Body of pancreas (tissue), 4 donors: ENCODE measurements at regions of chr9 and their contacts with region 1.

Region 1: GRCh38 chr9:95127249-95128176 is 190.0 kb downstream of the FANCC start:
- DNase-seq: peak; percentile 88 to 93 (median 89)
- ATAC-seq: peak; percentile 87
- H3K4me3 ChIP-seq: no peak overlapping the region
- H3K27ac ChIP-seq: no peak overlapping the region
- H3K4me1 ChIP-seq: peaks cover 30% of the 10 kb centered on the region
- H3K27me3 ChIP-seq: no peaks in the 10 kb centered on the region
- CTCF ChIP-seq: peak; percentile 93 to 99 (median 97)
- POLR2A ChIP-seq: peak in 1 of 3 donors; percentile 9

Region 2: DNA sequence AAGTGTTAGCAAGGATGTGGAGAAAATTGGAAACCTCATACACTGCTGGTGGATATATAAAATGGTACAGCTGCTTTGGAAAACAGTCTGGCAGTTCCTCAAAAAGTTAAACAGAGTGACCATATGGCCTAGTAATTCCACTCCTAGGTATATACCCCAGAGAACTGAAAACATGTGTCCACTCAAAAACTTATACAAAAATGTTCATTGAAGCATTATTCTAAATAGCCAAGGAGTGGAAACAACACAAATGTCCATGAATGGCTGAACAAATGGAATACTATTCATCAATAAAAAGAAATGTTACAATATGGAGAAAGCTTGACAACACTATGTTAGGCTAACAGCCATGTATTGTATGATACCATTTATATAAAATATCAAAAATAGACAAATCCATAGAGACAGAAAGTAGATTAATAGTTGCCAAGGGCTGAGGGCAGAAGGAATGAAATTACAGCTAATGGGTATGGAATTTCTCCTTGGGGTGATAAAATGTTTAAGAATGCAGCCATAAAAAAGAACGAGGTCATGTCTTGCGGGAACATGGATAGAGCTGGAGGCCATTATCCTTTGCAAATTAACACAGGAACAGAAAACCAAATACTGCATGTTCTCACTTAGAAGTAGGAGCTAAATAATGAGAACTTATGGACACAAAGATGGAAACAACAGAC is 454.6 kb before region 1 on chr9:
- intact Hi-C with region 1: loop called (anchors 10 kb)
- DNase-seq: no peak
- ATAC-seq: no peak
- H3K4me3 ChIP-seq: no peak overlapping the region
- H3K27ac ChIP-seq: no peak overlapping the region
- H3K4me1 ChIP-seq: peaks cover 5% of the 10 kb centered on the region
- H3K27me3 ChIP-seq: no peaks in the 10 kb centered on the region
- CTCF ChIP-seq: no peak
- POLR2A ChIP-seq: no peak

Region 3: DNA sequence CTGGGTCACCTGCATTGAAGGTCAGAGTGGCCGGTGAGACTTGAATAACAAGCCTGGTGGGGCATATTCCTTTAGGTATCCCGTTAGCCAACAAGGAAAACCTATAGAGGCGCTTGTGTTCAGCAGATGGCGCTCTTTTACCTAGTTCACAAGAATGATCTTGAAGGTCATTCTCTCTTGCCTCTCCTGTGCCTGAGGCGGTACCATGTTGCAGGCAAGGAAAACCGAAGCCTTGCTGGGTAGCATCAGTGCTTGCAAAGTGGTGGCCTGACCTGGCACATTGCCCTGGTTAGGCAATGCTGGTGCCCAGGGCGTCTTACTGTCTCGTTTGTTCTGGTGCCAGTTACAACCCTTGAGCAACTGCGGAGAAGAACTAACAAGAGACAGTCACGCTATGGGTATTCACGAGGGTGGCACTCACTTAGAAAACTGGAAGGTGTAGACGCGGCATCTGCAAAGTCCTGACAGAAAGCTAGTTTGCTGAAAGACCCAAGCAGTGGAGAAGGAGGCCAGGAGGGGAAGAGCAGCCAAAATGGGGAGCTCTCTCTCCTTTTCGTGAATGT is 344.3 kb before region 1 on chr9:
- intact Hi-C with region 1: loop called (anchors 10 kb)
- DNase-seq: peak; percentile 82 to 90 (median 88)
- ATAC-seq: peak; percentile 87
- H3K4me3 ChIP-seq: no peak overlapping the region
- H3K27ac ChIP-seq: peak overlapping the region in 3 of 4 donors; percentile 47 to 58 (median 52)
- H3K4me1 ChIP-seq: peaks cover 18% of the 10 kb centered on the region
- H3K27me3 ChIP-seq: no peaks in the 10 kb centered on the region
- CTCF ChIP-seq: peak; percentile 49 to 85 (median 74)
- POLR2A ChIP-seq: no peak

Region 4: DNA sequence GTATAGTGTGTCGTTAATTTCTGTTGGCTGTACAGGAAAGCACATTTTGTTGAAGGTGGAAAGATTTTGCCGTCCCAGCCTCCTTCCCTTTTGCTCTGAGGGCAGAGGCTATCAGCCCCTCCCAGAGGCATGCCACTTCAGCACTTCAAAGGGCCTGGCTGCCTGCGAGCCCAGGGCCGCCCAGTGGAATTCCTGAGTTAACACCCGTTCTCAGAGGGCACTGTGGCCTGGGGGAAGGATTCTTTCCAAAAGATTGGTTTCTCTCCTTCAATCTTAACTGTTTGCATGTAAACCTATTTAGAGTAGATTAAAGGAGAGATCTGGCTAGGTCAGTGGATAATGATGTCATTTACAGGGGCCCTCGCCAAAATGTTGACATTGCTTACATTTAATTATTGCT is 48.6 kb before region 1 on chr9:
- intact Hi-C with region 1: no loop called
- DNase-seq: peak in 1 of 4 donors; percentile 51
- ATAC-seq: peak; percentile 19
- H3K4me3 ChIP-seq: no peak overlapping the region
- H3K27ac ChIP-seq: peak overlapping the region in 3 of 4 donors; percentile 47 to 53 (median 52)
- H3K4me1 ChIP-seq: peaks cover 53% of the 10 kb centered on the region
- H3K27me3 ChIP-seq: no peaks in the 10 kb centered on the region
- CTCF ChIP-seq: peak in 2 of 7 experiments; percentile 10 to 31
- POLR2A ChIP-seq: no peak

Region 5: GRCh38 chr9:95486070-95486717 is 358.7 kb after region 1 on chr9:
- intact Hi-C with region 1: no loop called
- DNase-seq: peak; percentile 91 to 97 (median 94)
- ATAC-seq: peak; percentile 95
- H3K4me3 ChIP-seq: no peak overlapping the region
- H3K27ac ChIP-seq: peak overlapping the region; percentile 70 to 84 (median 81)
- H3K4me1 ChIP-seq: peaks cover 46% of the 10 kb centered on the region
- H3K27me3 ChIP-seq: no peaks in the 10 kb centered on the region
- CTCF ChIP-seq: no peak
- POLR2A ChIP-seq: peak in 1 of 3 donors; percentile 33

Region 6: DNA sequence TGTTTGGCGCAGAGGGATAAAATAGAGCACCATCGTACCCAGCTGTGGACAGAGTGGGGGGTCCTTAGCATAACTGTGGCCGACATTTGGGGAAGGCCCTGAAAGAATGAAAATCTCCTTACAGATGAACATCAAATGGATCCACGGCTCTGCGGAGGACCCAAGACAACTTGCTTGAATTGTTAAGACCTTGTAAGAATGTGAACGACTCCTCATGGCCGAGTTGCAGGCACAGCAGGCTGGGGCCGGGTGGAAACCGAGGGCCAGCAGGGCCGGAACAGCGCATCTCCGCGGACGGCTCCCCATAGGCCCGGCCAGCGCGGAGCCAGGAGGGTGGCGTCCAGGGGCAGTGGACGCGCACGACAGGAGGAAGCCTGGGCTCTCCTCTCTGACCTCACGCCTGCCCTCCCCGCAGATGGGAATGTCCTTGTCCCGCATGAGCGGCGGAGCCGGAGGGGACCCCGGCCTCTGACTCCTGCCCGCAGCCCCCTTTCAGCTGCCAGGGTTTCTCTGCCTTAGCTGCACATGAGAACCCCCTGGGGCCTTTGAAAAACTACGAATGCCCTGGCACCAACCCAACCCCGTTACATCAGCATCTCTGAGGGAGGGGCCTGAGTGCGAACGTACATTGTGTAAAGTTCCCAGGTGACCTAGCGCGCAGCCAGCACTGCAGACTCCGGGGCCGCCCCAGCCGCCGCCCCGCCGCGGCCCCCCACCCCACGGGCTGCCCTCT is 425.5 kb after region 1 on chr9:
- intact Hi-C with region 1: no loop called
- DNase-seq: peak; percentile 50 to 71 (median 60)
- ATAC-seq: peak; percentile 69
- H3K4me3 ChIP-seq: no peak overlapping the region
- H3K27ac ChIP-seq: no peak overlapping the region
- H3K4me1 ChIP-seq: no peaks in the 10 kb centered on the region
- H3K27me3 ChIP-seq: no peaks in the 10 kb centered on the region
- CTCF ChIP-seq: no peak
- POLR2A ChIP-seq: peak in 1 of 3 donors; percentile 15